CD4-positive, alpha-beta memory T cell (primary cell): ENCODE measurements at regions of chr4 and their contacts with region 1.

Region 1: DNA sequence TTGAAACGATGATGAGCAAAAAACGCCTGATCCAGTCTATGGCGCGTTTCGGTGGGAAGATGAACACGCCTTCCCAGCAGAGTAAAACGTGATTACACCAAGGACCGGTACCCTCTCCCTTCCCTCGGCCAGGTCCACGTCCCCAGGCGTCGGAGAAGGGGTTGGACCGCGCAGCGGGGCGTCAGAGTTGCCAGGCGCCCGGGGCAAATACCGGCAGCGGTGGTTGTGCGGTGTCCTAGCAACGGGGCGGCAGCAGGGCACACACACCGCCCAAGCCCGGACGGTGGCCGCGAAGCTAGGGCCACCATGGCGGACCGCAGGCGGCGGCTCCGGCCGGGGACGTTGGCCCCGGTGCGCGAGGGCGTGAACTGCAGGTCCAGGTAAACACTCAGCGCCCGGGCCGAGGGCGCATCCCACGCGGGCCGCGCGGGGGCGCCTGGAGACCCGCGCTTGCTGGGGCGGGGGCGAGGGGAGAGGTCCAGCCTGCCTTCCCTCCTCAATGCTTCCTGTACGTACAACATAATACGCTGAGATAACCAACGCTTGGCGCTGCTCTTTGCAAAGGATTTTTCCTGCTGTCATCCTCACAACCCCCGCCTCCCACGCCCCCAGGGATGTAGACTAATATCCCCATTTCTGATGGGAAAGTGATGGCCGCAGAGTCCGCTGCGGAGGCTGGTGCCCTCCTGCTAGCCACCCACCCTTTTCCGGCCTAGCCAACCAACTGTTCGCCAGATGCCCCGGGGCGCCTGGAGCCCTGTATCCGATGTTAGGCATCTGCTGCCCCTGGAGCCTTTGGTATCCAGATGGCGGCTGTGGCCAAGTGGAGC is at the start of gene FAM47E:
- DNase-seq: peak; percentile 33 to 41 (median 34)
- H3K4me3 ChIP-seq: peak within 1 kb of the TSS in 1 of 2 donors; percentile 47
- H3K4me3 Mint-ChIP-seq: peak within 1 kb of the TSS; percentile 71 to 89 (median 84)
- H3K27ac ChIP-seq: no peak within 1 kb of the TSS
- H3K27ac Mint-ChIP-seq: peak within 1 kb of the TSS in 3 of 7 donors; percentile 37 to 69 (median 44)
- H3K4me1 ChIP-seq: peaks cover 6% of the 10 kb centered on the region
- H3K4me1 Mint-ChIP-seq: peaks cover 3 to 8% (median 6%) of the 10 kb centered on the region in 4 donors
- H3K27me3 ChIP-seq: peaks cover 43% of the 10 kb centered on the region
- H3K27me3 Mint-ChIP-seq: peaks cover 48 to 51% of the 10 kb centered on the region in 2 donors
- total RNA-seq, gene FAM47E: 0.64 TPM in 1 of 2 experiments, not detected in the other

Region 2: DNA sequence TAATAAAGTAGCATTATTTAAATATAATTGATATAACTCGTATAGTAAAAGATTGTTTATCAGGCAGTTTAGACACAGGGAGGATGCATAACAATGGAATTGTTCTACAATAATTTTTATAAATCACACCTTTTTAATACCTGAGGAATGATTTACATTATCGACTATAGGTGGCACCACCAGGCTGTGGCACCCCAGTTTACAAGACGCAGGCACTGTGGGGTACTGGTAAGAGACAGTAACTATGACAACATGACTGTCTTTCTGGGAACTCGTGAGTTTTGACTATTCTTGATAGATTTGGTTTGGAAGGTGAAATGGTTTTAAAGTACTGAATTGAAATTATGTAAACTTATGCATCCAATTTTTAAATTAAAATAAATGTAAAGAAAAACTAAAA is 27.8 kb after region 1 on chr4:
- CTCF ChIA-PET with region 1: interaction called, 3 read pairs
- POLR2A ChIA-PET with region 1: no interaction called
- intact Hi-C with region 1: loop called (anchors 1 kb)
- DNase-seq: peak in 4 of 5 donors; percentile 26 to 49 (median 46)
- H3K4me3 ChIP-seq: no peak overlapping the region
- H3K4me3 Mint-ChIP-seq: no peak overlapping the region
- H3K27ac ChIP-seq: no peak overlapping the region
- H3K27ac Mint-ChIP-seq: no peak overlapping the region
- H3K4me1 ChIP-seq: no peaks in the 10 kb centered on the region
- H3K4me1 Mint-ChIP-seq: peaks cover 0 to 4% (median under 1%) of the 10 kb centered on the region in 4 donors
- H3K27me3 ChIP-seq: no peaks in the 10 kb centered on the region
- H3K27me3 Mint-ChIP-seq: peaks cover 5 to 10% of the 10 kb centered on the region in 2 donors